ENCODE measurements at regions of chr12 and their contacts with region 1.

Region 1: GRCh38 chr12:102439426-102440405 is 40.6 kb downstream of the IGF1 start:
- DNase-seq: peak in 2 of 5 donors; percentile 25 to 43
- ATAC-seq: peak in 2 of 4 donors; percentile 41 to 53
- H3K4me3 ChIP-seq: no peak overlapping the region
- H3K27ac ChIP-seq: peak overlapping the region in 7 of 12 donors; percentile 1 to 52 (median 21)
- H3K4me1 ChIP-seq: peaks cover 0 to 10% (median 0%) of the 10 kb centered on the region in 12 donors
- H3K27me3 ChIP-seq: no peaks in the 10 kb centered on the region
- CTCF ChIP-seq: no peak
- POLR2A ChIP-seq: no peak

Region 2: GRCh38 chr12:102479099-102479887 is 39.6 kb after region 1 on chr12:
- intact Hi-C with region 1: loop called in 1 of 10 experiments (anchors 5 kb)
- DNase-seq: no peak
- ATAC-seq: peak in 2 of 4 donors; percentile 7 to 15
- H3K4me3 ChIP-seq: peak overlapping the region; percentile 5 to 58 (median 42)
- H3K27ac ChIP-seq: peak overlapping the region in 9 of 12 donors; percentile 6 to 75 (median 36)
- H3K4me1 ChIP-seq: peaks cover 0 to 17% (median 4%) of the 10 kb centered on the region in 12 donors
- H3K27me3 ChIP-seq: peaks cover 0 to 4% (median 0%) of the 10 kb centered on the region in 9 donors
- CTCF ChIP-seq: no peak
- POLR2A ChIP-seq: no peak